ENCODE measurements at regions of chr13 and their contacts with region 1.

Region 1: DNA sequence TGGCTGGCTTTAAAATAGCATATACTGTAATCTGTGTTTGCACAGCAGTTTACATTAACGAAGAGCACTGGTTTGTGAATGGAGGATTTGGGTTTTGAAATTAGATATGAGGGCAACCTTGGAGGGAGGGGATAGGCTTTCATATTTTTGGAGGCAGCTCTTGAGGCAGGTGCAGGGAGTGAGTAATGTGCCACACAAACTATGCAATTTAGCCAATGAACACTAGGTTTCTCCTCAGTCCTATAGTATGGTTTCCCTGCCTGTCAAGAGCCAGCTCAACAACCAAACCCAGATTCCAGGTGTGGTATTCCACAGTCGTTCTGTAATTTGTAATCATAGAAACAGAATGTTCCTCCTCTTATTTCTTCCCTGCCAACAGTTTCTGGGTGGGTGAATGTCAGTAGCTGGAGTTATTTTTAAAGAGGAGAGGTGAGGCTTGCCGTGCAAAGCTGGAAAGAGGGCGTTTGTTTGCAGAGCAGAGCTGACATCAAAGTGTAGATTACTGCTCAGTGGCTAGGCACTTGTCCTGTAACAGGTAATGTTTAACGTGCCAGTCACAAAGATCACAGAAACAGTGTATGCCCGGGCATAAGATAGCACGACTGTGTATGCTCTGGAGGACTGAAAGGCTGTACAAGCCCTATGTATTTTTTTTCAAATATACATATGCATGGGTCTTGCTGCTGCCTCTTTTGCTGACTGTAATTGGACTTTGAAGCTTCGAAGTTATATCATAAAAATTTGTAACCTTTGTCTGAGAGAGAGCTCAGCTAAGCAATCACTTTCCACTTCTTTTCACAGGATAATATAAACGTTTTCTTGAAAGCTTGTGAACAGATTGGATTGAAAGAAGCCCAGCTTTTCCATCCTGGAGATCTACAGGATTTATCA is 124.2 kb downstream of the LMO7 start:
- DNase-seq: peak in 1 of 2 donors; percentile 48
- ATAC-seq: peak; percentile 88 to 93 (median 89)
- H3K4me3 ChIP-seq: peak overlapping the region; percentile 69
- H3K27ac ChIP-seq: peak overlapping the region; percentile 89
- H3K4me1 ChIP-seq: peaks cover 8% of the 10 kb centered on the region
- H3K27me3 ChIP-seq: no peaks in the 10 kb centered on the region
- CTCF ChIP-seq: peak; percentile 28

Region 2: DNA sequence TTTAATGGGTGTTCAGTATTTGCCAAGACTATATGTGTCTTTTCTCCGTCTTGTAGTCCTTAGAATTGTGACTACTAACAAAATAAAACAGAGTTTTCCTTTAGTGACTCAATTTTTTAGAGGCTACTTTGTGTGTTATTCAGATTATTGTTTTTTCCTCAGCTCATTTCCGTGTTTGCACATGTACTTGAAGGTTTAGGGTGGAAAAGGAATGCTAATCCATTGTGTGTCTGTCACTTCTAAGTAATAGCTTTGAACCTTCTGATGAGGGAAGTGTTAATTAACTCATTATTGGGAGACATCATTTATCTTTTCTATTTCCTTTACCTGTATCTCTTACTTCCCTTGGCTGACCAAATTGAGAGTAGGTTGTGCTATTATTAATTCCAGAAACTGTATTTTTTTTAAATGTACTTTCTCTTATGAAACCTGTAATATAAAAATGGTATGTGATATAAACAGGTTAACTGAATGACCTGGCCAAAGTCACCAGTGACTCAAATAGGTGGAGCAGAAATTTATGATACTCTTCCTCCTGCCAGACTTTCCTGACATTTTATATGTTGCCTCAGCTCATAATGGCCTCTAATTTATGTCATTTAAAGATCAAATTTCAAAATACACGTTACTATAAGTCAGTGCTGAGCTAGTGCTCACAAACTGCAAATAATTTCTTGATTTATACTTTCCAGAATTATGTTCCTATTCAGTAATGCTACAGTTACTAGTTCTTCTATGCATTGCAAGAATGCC is 35.4 kb before region 1 on chr13:
- intact Hi-C with region 1: loop called in 1 of 2 experiments (anchors 5 kb)
- DNase-seq: no peak
- ATAC-seq: peak in 2 of 4 donors; percentile 61 to 74
- H3K4me3 ChIP-seq: no peak overlapping the region
- H3K27ac ChIP-seq: no peak overlapping the region
- H3K4me1 ChIP-seq: no peaks in the 10 kb centered on the region
- H3K27me3 ChIP-seq: no peaks in the 10 kb centered on the region
- CTCF ChIP-seq: no peak

Region 3: GRCh38 chr13:75803164-75803611 is 42.8 kb after region 1 on chr13:
- intact Hi-C with region 1: loop called in 1 of 2 experiments (anchors 5 kb)
- DNase-seq: no peak
- ATAC-seq: peak in 2 of 4 donors; percentile 12 to 16
- H3K4me3 ChIP-seq: no peak overlapping the region
- H3K27ac ChIP-seq: peak overlapping the region; percentile 62
- H3K4me1 ChIP-seq: peaks cover 19% of the 10 kb centered on the region
- H3K27me3 ChIP-seq: no peaks in the 10 kb centered on the region
- CTCF ChIP-seq: no peak

Measured in psoas muscle (tissue), 8 donors.